Vagina (tissue), 2 donors: ENCODE measurements at regions of chr19 and their contacts with region 1.

Region 1: DNA sequence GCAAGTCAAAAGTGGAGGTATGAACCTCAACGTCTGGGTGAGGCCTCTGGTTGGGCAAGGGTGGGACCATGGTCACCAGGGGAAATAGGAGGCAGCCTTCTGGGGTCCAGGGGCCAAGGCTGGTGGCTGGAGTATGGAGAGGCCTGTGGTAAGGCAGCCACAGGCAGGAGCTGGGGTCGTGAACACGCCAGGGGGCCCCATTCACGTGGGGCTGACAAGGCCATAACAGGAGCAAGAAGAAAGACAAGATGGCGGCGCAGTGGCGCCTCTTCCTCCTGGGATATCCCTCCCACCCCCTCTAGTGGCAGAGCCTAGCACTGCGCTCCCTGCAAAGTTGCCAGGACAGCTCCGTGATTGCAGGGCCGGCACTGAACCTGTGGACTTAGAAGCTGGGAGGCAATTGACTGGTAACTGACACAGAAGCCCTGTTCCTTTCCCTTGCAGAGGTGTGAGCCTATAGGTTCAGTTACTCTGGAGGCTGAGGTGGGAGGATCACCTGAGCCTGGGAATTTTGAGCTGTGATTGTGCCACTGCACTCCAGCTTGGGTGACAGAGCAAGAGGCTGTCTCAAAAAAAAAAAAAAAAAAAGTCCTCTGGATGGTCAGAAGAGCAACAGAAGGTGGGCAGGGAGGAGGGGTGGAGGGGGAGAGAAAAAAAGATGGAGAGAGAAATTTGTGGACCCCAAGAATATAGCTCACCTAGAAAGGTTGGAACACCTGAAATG is 19.7 kb upstream of the EDDM13 start:
- DNase-seq: no peak
- H3K4me3 ChIP-seq: no peak overlapping the region
- H3K27ac ChIP-seq: no peak overlapping the region
- H3K4me1 ChIP-seq: no peaks in the 10 kb centered on the region
- H3K27me3 ChIP-seq: no peaks in the 10 kb centered on the region
- CTCF ChIP-seq: peak; percentile 49 to 61 (median 53)
- POLR2A ChIP-seq: no peak

Region 2: DNA sequence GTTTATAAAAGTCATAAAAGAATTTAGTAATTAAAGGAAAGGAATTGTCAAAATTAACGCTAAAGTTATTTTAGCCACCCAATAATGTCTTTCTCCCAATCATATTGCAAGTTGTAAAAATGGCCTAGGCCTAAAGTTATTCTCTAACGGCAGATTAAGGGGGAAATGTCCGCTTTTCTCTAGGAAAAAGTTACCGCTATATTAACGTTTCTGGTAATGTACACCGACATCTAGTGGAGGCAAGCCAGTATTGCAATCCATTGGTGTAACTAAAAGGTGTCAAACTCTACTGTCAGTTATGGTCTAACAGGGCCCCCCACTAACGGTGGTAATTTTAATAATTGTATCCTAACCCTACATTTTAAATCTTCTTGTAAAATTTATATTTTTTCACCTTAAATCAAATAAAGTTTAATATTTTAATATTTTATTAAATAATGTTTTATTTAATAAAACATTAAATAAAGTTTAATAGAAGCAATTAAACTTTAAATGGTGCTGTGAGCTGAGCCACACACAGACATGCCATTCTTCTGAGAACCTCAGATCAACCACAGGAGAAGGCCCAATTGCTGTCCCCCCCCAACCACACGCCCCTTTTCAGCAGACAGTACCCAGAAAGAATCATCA is 97.7 kb after region 1 on chr19:
- intact Hi-C with region 1: loop called (anchors 10 kb)
- DNase-seq: no peak
- H3K4me3 ChIP-seq: no peak overlapping the region
- H3K27ac ChIP-seq: no peak overlapping the region
- H3K4me1 ChIP-seq: no peaks in the 10 kb centered on the region
- H3K27me3 ChIP-seq: no peaks in the 10 kb centered on the region
- CTCF ChIP-seq: peak; percentile 72 to 82 (median 79)
- POLR2A ChIP-seq: no peak